Endothelial cell of umbilical vein (primary cell): ENCODE measurements at regions of chr5 and their contacts with region 1.

Region 1: DNA sequence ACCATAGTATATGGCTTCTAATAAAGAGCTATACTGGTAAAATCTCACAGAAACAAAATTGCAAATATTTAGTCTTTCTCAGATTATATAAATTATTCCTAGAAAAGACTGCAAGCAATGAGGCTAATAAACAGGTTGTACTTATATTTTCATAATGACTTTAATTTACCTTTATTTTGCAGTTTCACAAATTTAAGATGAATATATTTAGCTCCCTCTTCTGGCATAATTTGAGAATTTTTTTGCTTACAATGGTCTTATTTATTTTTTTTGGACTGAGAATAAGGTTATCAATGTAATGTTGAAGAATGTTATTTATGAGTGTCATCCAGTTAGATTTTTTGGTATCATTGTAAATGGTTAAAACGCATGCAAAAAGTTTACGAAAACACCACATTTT is 56.7 kb downstream of the PIK3R1 start:
- DNase-seq: peak; percentile 32
- H3K4me3 ChIP-seq: no peak overlapping the region
- H3K27ac ChIP-seq: no peak overlapping the region
- H3K4me1 ChIP-seq: no peaks in the 10 kb centered on the region
- H3K27me3 ChIP-seq: no peaks in the 10 kb centered on the region
- CTCF ChIP-seq: peak in 1 of 2 donors; percentile 15
- POLR2A ChIP-seq: no peak

Region 2: DNA sequence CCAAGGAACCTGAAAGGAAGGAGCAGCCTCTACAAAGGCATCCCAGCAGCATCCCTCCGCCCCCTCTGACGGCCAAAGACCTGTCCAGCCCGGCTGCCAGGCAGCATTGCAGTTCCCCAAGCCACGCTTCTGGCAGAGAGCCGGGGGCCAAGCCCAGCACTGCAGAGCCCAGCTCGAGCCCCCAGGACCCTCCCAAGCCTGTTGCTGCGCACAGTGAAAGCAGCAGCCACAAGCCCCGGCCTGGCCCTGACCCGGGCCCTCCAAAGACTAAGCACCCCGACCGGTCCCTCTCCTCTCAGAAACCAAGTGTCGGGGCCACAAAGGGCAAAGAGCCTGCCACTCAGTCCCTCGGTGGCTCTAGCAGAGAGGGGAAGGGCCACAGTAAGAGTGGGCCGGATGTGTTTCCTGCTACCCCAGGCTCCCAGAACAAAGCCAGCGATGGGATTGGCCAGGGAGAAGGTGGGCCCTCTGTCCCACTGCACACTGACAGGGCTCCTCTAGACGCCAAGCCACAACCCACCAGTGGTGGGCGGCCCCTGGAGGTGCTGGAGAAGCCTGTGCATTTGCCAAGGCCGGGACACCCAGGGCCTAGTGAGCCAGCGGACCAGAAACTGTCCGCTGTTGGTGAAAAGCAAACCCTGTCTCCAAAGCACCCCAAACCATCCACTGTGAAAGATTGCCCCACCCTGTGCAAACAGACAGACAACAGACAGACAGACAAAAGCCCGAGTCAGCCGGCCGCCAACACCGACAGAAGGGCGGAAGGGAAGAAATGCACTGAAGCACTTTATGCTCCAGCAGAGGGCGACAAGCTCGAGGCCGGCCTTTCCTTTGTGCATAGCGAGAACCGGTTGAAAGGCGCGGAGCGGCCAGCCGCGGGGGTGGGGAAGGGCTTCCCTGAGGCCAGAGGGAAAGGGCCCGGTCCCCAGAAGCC is 1106.5 kb before region 1 on chr5:
- CTCF ChIA-PET with region 1: interaction called, 12 read pairs
- POLR2A ChIA-PET with region 1: interaction called, 3 read pairs
- dilution Hi-C with region 1: loop called (anchors 25 kb)
- intact Hi-C with region 1: loop called (anchors 1 kb)
- DNase-seq: peak; percentile 74
- H3K4me3 ChIP-seq: no peak overlapping the region
- H3K27ac ChIP-seq: peak overlapping the region; percentile 42
- H3K4me1 ChIP-seq: peaks cover 8% of the 10 kb centered on the region
- H3K27me3 ChIP-seq: no peaks in the 10 kb centered on the region
- CTCF ChIP-seq: peak; percentile 74 to 88
- POLR2A ChIP-seq: no peak

Region 3: DNA sequence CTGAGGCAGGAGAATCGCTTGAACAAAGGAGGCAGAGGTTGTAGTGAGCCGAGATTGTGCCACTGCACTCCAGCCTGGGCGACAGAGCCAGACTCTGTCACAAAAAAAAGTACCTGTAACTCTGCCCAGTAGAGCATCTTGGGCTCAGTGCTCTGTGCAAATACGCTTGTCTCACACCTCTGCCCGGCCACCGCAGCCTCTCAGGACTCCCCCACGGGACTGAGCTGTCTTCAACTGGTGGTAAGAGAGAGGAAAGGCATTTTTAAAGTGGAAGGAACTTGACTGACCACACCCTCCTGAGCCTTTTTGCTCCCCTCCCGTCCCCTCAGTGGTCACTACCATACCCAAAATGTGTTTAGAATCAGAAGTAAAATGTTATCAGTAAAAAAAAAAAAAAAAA is 231.0 kb before region 1 on chr5:
- CTCF ChIA-PET with region 1: no interaction called
- POLR2A ChIA-PET with region 1: interaction called, 13 read pairs
- dilution Hi-C with region 1: no loop called
- intact Hi-C with region 1: no loop called
- DNase-seq: no peak
- H3K4me3 ChIP-seq: no peak overlapping the region
- H3K27ac ChIP-seq: no peak overlapping the region
- H3K4me1 ChIP-seq: peaks cover 2% of the 10 kb centered on the region
- H3K27me3 ChIP-seq: no peaks in the 10 kb centered on the region
- CTCF ChIP-seq: no peak
- POLR2A ChIP-seq: no peak

Region 4: DNA sequence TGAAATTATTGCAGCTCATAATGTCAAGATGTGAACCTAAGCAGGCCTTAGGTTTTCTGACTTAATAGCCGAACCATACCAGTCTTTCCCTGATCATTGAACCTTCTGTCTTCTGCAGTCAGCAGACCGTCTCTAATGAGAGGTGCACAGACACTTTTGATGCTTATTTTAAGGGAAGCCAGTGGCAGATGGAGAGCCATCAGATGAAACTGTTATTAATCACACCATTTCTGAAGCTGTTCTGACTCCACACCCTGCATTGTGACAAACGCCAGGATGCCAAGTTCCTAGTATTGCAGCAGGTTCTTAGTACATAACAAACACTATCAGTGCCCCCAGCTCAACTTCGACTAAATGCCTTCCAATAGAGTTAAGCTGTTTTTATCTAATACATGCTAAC is 13.8 kb before region 1 on chr5:
- CTCF ChIA-PET with region 1: interaction called, 18 read pairs
- POLR2A ChIA-PET with region 1: no interaction called
- dilution Hi-C with region 1: no loop called
- intact Hi-C with region 1: no loop called
- DNase-seq: no peak
- H3K4me3 ChIP-seq: no peak overlapping the region
- H3K27ac ChIP-seq: no peak overlapping the region
- H3K4me1 ChIP-seq: peaks cover 2% of the 10 kb centered on the region
- H3K27me3 ChIP-seq: no peaks in the 10 kb centered on the region
- CTCF ChIP-seq: no peak
- POLR2A ChIP-seq: no peak

Region 5: DNA sequence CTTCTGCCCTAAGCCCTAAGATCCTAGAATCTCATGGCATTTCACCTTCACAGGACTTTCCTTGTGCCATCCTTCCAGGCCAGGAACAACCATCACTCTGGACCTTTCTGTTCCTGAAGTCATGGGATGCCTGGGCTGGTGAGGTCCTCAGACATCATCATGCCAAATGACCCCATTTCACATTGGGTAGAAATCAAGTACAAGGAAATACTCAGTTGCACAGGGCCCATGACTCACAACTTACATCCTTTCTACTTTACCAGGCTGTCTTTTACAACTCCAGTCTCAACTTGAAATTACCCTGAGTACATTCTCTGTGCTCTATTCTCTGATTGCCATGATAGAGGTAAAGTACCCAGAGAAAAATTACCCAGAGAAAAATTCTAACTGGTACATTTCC is 110.4 kb after region 1 on chr5:
- CTCF ChIA-PET with region 1: no interaction called
- POLR2A ChIA-PET with region 1: no interaction called
- dilution Hi-C with region 1: no loop called
- intact Hi-C with region 1: no loop called
- DNase-seq: peak; percentile 28
- H3K4me3 ChIP-seq: no peak overlapping the region
- H3K27ac ChIP-seq: no peak overlapping the region
- H3K4me1 ChIP-seq: no peaks in the 10 kb centered on the region
- H3K27me3 ChIP-seq: peaks cover 3 to 19% of the 10 kb centered on the region in 2 experiments
- CTCF ChIP-seq: no peak
- POLR2A ChIP-seq: no peak

Region 6: GRCh38 chr5:68628082-68628814 is 356.0 kb after region 1 on chr5:
- CTCF ChIA-PET with region 1: no interaction called
- POLR2A ChIA-PET with region 1: no interaction called
- dilution Hi-C with region 1: no loop called
- intact Hi-C with region 1: no loop called
- DNase-seq: no peak
- H3K4me3 ChIP-seq: no peak overlapping the region
- H3K27ac ChIP-seq: no peak overlapping the region
- H3K4me1 ChIP-seq: no peaks in the 10 kb centered on the region
- H3K27me3 ChIP-seq: no peaks in the 10 kb centered on the region
- CTCF ChIP-seq: no peak
- POLR2A ChIP-seq: no peak